GM12878 (cell line): ENCODE measurements at regions of chr16 and their contacts with region 1.

Region 1: DNA sequence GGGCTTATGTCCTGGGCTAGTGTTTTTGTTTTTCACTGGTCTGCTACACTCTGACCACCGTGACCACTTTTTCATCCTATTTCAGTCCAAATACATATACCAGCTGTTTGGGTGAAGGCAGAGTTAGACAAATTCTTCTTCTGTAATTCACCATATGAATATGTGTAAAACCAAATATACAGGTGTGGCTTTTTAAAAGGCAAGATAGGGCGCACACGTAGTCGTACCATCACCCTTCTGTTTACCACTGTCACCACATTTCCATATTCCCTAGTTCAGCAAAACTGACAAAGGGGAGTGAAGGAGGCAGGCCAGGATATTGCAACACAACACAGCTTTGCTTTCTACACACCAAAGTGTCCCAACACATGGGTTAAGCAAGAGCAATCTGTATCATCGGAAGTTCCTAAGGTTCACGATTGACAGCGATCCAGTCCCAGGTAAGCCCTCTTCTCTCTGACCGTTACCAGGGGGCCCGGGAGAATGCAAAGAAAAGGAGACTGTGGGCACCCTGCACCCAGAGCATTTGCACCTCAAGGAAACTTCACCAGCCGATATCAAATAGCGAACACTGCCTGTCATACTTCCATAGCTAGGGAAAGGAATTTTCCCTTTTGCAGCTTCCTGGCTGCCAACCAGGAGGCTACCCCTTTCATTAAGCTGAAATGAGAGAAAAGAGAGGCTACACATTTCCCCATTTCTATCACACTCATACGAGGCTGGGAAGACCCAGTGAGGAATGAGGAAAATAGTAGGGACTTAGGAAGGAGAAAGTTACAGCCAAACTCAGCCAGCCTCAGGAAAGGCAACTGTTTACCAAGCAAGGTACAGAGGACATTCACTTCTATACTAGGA is 23.1 kb downstream of the CREBBP start:
- DNase-seq: peak; percentile 42
- ATAC-seq: peak; percentile 65
- H3K4me3 ChIP-seq: 0 out of 2 replicates have a peak overlapping the region, but pooled peaks have one; percentile 29
- H3K27ac ChIP-seq: peak overlapping the region; percentile 60
- H3K4me1 ChIP-seq: peaks cover 62% of the 10 kb centered on the region
- H3K27me3 ChIP-seq: no peaks in the 10 kb centered on the region
- CTCF ChIP-seq: no peak
- EP300 ChIP-seq: peak in 1 of 2 experiments; percentile 68; a peak in 2 of 4 replicates
- POLR2A ChIP-seq: no peak
- RAD21 ChIP-seq: no peak

Region 2: DNA sequence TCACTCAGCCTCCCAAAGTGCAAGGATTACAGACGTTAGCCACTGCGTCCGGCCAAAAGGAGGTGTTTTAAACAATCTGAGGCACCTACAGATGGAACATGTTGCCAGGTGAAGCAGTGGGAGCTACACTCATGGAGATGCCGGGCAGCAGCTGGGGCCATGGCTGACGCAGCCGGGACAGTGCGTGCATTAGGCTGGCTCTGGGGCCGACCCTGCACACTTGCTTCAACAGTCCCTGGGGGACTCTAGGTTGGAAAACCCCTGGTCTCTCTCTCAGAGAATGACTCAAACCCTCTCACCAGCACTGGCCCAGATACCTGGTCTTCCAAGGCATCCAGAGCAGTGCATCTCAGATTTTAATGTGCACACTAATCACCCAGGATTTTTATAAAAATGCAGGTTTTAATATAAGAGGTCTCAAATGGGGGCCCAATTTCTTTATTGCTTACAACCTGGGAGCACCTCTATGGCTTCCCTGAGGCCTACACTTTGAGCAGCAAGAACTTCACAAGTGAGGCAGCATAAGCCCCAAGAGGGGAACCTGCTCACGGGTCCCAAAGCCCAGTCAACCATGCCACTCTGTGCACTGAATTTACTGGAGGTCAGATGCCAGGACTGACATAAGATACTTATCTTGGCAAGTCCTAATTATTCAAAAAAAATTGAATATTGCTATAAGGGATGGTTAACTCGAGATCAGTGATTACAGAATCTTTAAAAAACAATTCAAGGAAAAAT is 69.3 kb before region 1 on chr16:
- CTCF ChIA-PET with region 1: interaction called, 3 read pairs
- POLR2A ChIA-PET with region 1: no interaction called
- RAD21 ChIA-PET with region 1: no interaction called
- SMC1A ChIA-PET with region 1: interaction called, 6 read pairs
- in situ Hi-C with region 1: no loop called
- intact Hi-C with region 1: loop called (anchors 5 kb)
- DNase-seq: peak; percentile 55
- ATAC-seq: peak; percentile 93
- H3K4me3 ChIP-seq: no peak overlapping the region
- H3K27ac ChIP-seq: peak overlapping the region; percentile 47
- H3K4me1 ChIP-seq: peaks cover 29% of the 10 kb centered on the region
- H3K27me3 ChIP-seq: no peaks in the 10 kb centered on the region
- CTCF ChIP-seq: no peak
- EP300 ChIP-seq: peak; percentile 82 to 86
- POLR2A ChIP-seq: no peak
- RAD21 ChIP-seq: no peak

Region 3: DNA sequence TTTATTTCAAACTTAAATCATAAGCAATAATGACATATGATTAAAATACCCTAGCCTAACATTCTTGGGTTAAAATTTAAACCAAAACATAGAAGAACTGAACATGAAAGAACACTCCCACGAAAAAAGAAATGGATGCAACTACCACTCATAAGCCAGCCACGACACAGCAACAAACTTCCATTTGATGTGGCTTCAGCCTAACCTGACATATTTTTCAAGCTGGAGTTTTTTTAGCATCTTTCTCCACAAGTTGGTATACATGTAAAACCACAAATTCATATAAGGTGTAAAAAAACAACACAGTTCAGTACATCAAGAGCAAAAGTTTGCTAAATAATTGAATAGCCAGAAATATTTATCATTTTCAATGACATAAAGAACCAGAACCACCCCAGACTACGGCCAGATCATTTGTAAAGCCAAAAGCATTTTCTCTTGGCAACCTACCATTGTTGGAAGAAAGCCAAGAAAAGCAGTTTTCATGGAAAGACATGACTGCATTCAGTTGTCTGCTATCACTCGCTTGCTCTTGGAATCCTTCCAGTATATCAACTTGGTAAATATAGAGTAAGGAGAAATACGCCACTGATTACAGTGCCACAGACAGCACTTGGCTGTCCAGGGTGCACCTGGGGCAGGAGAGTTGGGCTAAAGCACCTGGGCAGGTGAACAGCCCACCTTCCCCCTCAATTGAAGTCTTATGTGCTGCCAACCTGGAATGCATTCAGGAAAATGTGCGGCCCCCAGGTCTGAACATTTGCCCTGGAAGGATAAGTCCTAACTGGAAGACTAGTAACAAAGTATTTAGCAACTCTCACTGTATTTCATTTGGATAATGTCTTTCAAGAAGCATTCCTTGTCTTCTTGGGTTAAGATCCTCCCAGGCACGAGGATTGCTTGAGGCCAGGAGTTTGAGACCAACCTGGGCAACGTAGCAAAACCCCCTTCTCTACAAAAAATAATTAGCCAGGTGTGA is 37.4 kb before region 1 on chr16:
- CTCF ChIA-PET with region 1: no interaction called
- POLR2A ChIA-PET with region 1: no interaction called
- RAD21 ChIA-PET with region 1: no interaction called
- SMC1A ChIA-PET with region 1: interaction called, 3 read pairs
- in situ Hi-C with region 1: no loop called
- intact Hi-C with region 1: loop called (anchors 5 kb)
- DNase-seq: no peak
- ATAC-seq: no peak
- H3K4me3 ChIP-seq: no peak overlapping the region
- H3K27ac ChIP-seq: no peak overlapping the region
- H3K4me1 ChIP-seq: peaks cover 35% of the 10 kb centered on the region
- H3K27me3 ChIP-seq: no peaks in the 10 kb centered on the region
- CTCF ChIP-seq: no peak
- EP300 ChIP-seq: no peak
- POLR2A ChIP-seq: no peak
- RAD21 ChIP-seq: no peak

Region 4: DNA sequence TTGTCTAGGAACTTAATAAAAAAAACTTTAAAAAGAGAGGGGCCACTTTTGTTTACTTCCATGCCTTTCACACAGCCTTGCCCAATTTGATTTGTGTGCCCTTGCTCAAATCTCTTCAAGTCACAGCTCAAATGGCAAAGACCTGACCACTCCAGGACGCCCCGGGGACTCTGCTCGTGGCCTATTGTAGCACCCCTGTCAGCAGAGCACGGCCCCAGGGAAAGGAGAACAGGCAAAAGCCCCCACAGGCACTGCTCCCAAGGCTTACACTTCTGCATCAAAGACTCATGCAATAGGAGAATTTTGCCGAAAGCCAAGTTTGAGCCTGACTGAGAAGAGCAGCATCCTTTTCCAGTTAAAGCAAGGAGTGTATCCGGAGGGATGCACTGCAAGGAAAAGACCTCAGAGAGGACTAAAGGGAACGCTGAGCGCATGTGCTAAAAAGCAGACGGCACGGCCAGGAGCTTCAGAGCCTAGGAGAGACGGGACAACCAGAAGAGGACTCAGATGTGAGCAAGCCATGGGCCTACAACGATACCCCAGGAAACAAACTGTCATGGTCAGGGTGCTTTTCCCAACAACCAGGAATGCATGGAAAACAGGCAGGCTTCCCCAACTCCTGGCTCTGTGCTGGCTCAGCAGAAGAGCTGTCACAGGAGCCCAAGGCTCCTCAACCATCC is 14.9 kb after region 1 on chr16:
- CTCF ChIA-PET with region 1: interaction called, 35 read pairs
- POLR2A ChIA-PET with region 1: interaction called, 22 read pairs
- RAD21 ChIA-PET with region 1: interaction called, 49 read pairs
- SMC1A ChIA-PET with region 1: interaction called, 160 read pairs
- in situ Hi-C with region 1: no loop called
- intact Hi-C with region 1: no loop called
- DNase-seq: no peak
- ATAC-seq: no peak
- H3K4me3 ChIP-seq: peak overlapping the region; percentile 6; the same call in 1 of the 2 replicates
- H3K27ac ChIP-seq: no peak overlapping the region
- H3K4me1 ChIP-seq: peaks cover 6% of the 10 kb centered on the region
- H3K27me3 ChIP-seq: no peaks in the 10 kb centered on the region
- CTCF ChIP-seq: no peak
- EP300 ChIP-seq: no peak
- POLR2A ChIP-seq: no peak
- RAD21 ChIP-seq: no peak